Pancreas (tissue), 10 donors: ENCODE measurements at regions of chr3 and their contacts with region 1.

Region 1: DNA sequence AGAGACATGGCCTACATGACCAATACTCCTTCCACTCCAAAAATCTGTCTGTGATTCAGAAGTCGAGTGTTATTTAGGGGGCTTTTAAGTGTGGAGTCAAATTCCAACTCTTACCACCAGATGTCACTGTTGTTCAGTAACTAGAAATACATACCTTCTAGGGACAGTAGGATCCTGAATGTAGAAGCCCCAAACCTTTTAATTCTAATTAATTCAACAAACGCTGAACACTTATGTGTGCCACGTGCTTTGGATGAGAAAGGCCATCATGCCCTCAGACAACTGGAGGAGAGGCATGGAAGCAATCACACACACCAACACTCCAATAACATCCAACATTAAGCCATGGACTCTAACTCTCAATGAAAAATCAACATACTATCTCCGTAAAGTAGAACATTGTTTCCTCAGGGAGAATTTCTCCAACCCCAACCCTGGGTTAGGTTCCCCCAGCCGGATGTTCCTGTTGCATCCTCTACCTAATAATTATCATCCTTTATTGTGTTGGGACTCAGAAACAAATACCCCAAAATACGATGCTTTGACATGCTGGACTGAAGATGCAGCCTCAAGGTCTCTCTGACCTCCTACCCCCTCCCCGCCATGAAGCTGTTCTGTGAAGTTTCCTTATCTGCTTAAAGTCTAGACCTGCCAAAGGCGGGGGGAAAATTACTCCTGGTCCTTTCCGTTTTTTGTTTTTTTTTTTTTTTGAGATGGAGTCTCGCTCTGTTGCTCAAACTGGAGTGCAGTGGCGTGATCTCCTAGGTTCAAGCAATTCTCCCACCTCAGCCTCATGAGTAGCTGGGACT is 8.0 kb upstream of the CCDC13 start:
- DNase-seq: no peak
- ATAC-seq: peak; percentile 67 to 85 (median 81)
- H3K4me3 ChIP-seq: no peak overlapping the region
- H3K27ac ChIP-seq: peak overlapping the region in 2 of 4 donors; percentile 17 to 64
- H3K4me1 ChIP-seq: no peaks in the 10 kb centered on the region
- H3K27me3 ChIP-seq: no peaks in the 10 kb centered on the region
- CTCF ChIP-seq: peak; percentile 66 to 77 (median 70)

Region 2: GRCh38 chr3:40877631-40878463 is 1903.2 kb before region 1 on chr3:
- intact Hi-C with region 1: no loop called
- DNase-seq: peak; percentile 67 to 90 (median 82)
- ATAC-seq: peak; percentile 90 to 95 (median 94)
- H3K4me3 ChIP-seq: no peak overlapping the region
- H3K27ac ChIP-seq: peak overlapping the region; percentile 35 to 72 (median 57)
- H3K4me1 ChIP-seq: peaks cover 9 to 23% (median 16%) of the 10 kb centered on the region in 3 donors
- H3K27me3 ChIP-seq: no peaks in the 10 kb centered on the region
- CTCF ChIP-seq: no peak

Region 3: DNA sequence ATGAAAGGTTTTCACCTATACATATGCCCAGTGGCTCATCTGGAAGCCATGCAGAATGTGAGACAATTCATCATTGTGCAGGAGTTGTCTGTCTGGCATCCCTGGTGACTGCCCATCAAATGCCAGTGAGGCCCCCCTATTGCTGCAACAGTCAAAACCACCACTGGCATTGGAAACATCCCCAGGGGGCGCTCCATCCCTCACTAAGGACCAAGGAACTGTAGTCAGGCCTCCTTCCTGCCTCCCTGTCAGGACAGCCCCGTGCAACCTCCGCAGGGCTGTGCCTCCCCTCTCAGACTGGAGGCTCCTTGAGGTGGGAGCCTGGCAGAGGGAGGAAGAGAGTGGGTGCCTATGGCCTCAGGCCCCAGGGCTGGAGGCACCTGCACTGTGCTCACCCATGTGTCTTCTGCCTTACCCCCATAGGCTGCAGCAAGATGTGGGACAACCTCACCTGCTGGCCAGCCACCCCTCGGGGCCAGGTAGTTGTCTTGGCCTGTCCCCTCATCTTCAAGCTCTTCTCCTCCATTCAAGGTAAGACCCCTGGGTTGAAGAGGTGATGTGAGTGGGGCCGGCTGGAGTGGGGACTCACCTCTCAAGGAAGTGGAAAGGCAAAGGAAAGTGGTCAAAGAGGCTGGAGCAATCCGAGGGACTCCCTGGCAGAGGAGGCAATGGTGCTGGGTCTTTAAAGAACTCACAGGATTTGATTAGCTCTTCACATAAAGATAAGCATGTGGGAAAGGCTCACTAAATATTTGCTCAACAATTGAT is 262.1 kb before region 1 on chr3:
- intact Hi-C with region 1: no loop called
- DNase-seq: no peak
- ATAC-seq: no peak
- H3K4me3 ChIP-seq: no peak overlapping the region
- H3K27ac ChIP-seq: no peak overlapping the region
- H3K4me1 ChIP-seq: no peaks in the 10 kb centered on the region
- H3K27me3 ChIP-seq: no peaks in the 10 kb centered on the region
- CTCF ChIP-seq: no peak

Region 4: GRCh38 chr3:42831321-42831713 is 50.2 kb after region 1 on chr3:
- intact Hi-C with region 1: loop called in 1 of 3 experiments (anchors 5 kb)
- DNase-seq: peak in 5 of 6 donors; percentile 42 to 81 (median 70)
- ATAC-seq: peak; percentile 83 to 94 (median 88)
- H3K4me3 ChIP-seq: no peak overlapping the region
- H3K27ac ChIP-seq: no peak overlapping the region
- H3K4me1 ChIP-seq: no peaks in the 10 kb centered on the region
- H3K27me3 ChIP-seq: no peaks in the 10 kb centered on the region
- CTCF ChIP-seq: peak; percentile 38 to 62 (median 56)

Region 5: GRCh38 chr3:42839616-42840015 is 58.5 kb after region 1 on chr3:
- intact Hi-C with region 1: loop called in 2 of 3 experiments (anchors 5 kb)
- DNase-seq: peak in 2 of 6 donors; percentile 25 to 53
- ATAC-seq: peak; percentile 90 to 99 (median 96)
- H3K4me3 ChIP-seq: no peak overlapping the region
- H3K27ac ChIP-seq: no peak overlapping the region
- H3K4me1 ChIP-seq: no peaks in the 10 kb centered on the region
- H3K27me3 ChIP-seq: no peaks in the 10 kb centered on the region
- CTCF ChIP-seq: peak; percentile 27 to 84 (median 72)